Brain microvascular endothelial cell (primary cell): ENCODE measurements at regions of chr18 and their contacts with region 1.

Region 1: DNA sequence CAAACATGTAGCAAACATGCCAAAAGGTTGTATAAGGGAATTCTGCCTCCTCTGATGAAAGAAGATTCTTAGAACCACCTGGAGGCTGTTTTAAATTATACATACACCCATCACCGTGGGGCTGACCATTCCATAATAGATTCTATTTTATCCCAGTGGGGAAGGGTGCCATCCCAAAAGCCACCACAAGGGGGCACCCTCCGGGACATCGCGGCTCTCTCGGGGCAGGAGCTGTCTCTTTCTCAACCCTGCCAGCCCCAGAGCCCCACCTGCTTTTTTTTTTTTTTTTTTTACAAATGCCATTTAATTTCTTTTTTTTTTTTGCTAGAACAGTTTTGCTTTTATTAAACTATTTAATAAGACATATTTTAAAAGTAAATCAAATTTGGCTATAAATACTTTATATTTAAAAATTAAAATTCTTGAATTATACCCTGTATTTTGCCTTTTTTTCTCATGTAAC is 8.6 kb upstream of the MTCL1 start:
- DNase-seq: peak; percentile 57
- H3K4me3 ChIP-seq: no peak overlapping the region
- H3K27ac ChIP-seq: no peak overlapping the region
- H3K27me3 ChIP-seq: no peaks in the 10 kb centered on the region
- CTCF ChIP-seq: peak; percentile 93

Region 2: GRCh38 chr18:8988261-8988871 is 291.6 kb after region 1 on chr18:
- in situ Hi-C with region 1: loop called (anchors 10 kb)
- DNase-seq: peak; percentile 53
- H3K4me3 ChIP-seq: no peak overlapping the region
- H3K27ac ChIP-seq: no peak overlapping the region
- H3K27me3 ChIP-seq: no peaks in the 10 kb centered on the region
- CTCF ChIP-seq: peak; percentile 93